Naive thymus-derived CD4-positive, alpha-beta T cell (primary cell): ENCODE measurements at regions of chr14 and their contacts with region 1.

Region 1: DNA sequence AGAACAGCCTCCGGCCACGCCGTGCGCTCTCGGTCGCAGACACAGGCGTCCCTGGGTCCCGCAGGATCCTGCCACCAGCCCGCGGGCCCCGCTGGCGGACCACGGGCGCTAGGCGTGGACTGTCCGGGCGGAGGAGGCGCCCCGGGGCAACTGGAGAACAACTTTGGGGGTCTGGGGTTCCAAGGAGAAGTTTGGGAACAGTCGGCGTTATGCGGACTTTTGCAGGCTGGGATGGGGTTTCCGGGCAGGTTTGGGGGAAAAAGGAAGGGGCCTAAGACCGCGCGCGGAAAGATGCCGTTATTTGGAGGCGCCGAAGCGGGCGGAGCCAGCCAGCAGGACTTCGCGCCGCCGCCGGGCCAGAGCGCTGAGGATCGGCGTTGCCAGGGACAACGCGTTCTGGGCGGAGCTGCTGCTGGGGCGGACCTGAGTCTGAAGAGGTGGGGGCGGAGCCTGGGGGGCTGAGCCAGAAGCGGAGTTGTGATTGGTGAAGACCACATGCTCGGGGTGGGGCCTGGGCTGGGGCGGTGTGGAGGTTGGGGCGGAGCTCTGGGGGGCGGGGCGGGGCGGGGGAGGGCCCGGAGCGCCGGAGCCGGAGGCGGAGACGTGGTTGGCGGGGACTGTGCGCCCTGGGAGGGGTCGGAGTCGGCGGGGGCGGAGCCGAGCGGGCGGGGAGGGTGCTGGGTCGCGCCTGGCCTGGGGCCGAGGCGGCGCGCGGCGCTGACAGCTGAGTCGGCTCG is at the start of gene CYP46A1:
- DNase-seq: peak; percentile 97 to 99 (median 99)
- ATAC-seq: peak; percentile 98
- H3K4me3 ChIP-seq: peak within 1 kb of the TSS; percentile 93
- H3K4me3 Mint-ChIP-seq: peak within 1 kb of the TSS; percentile 79 to 96 (median 92)
- H3K27ac ChIP-seq: peak within 1 kb of the TSS; percentile 75
- H3K27ac Mint-ChIP-seq: peak within 1 kb of the TSS; percentile 52 to 94 (median 83)
- H3K4me1 ChIP-seq: peaks cover 5 to 12% of the 10 kb centered on the region in 2 donors
- H3K4me1 Mint-ChIP-seq: peaks cover 2 to 29% (median 11%) of the 10 kb centered on the region in 7 donors
- H3K27me3 ChIP-seq: no peaks in the 10 kb centered on the region
- H3K27me3 Mint-ChIP-seq: peaks cover 2 to 34% (median 32%) of the 10 kb centered on the region in 5 donors
- total RNA-seq, gene CYP46A1: 0.13 to 0.34 (median 0.32) TPM in 4 of 5 experiments, not detected in the other

Region 2: DNA sequence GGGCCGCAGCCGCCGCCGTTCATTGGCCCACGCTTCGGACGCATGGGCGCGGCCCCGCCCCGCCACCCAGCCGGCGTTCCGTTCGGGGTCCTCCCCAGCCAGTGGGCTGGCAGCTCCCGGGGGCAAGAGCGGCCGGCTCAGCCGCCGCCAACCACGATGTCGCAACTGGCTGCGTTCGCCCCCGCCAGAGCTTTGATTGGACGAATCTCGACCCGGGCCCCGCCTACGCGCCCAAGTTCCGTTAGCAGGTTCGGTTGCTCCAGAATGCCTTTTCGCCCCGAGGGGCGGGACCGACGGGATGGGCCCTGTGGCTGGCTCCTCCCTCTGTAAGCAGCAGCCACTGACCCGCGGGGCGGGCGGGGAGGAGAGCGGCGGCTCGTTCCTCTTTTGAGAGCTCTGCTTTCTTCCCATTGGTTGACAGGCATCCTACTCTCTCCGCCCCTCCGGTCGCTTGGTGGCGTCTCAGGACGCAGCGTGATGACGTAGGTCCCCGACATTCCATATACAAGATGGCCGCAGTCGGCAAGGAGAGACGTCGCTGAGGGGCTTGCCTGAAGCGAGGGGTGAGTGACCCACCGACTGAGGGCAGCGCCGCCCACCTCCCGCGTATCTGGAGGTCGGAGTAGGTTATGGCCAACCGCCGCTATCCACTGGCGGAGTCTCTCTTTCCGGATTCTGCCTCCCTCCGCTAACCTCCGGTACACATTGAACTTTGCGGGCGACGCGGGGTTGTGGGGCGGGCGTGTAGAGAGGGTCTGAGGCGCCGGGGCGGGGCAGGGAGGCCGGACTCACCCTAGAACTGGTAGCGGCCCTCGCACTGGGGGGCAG is 202.7 kb before region 1 on chr14 and contains the start of gene CCNK:
- CTCF ChIA-PET with region 1: interaction called, 3 read pairs
- POLR2A ChIA-PET with region 1: interaction called, 9 read pairs
- intact Hi-C with region 1: loop called (anchors 1 kb)
- DNase-seq: peak; percentile 98 to 100 (median 100)
- ATAC-seq: peak; percentile 92
- H3K4me3 ChIP-seq: peak within 1 kb of the TSS; percentile 86
- H3K4me3 Mint-ChIP-seq: peak within 1 kb of the TSS; percentile 89 to 100 (median 98)
- H3K27ac ChIP-seq: peak within 1 kb of the TSS; percentile 93
- H3K27ac Mint-ChIP-seq: peak within 1 kb of the TSS; percentile 95 to 99 (median 98)
- H3K4me1 ChIP-seq: peaks cover 26 to 34% of the 10 kb centered on the region in 2 donors
- H3K4me1 Mint-ChIP-seq: peaks cover 44 to 79% (median 70%) of the 10 kb centered on the region in 7 donors
- H3K27me3 ChIP-seq: no peaks in the 10 kb centered on the region
- H3K27me3 Mint-ChIP-seq: no peaks in the 10 kb centered on the region
- total RNA-seq, gene CCNK: 68.4 to 139 (median 81.9) TPM

Region 3: GRCh38 chr14:99729991-99730868 is 46.4 kb after region 1 on chr14:
- CTCF ChIA-PET with region 1: no interaction called
- POLR2A ChIA-PET with region 1: no interaction called
- intact Hi-C with region 1: loop called in 1 of 2 experiments (anchors 1 kb)
- DNase-seq: peak; percentile 26 to 85 (median 53)
- ATAC-seq: peak; percentile 71
- H3K4me3 ChIP-seq: no peak overlapping the region
- H3K4me3 Mint-ChIP-seq: peak overlapping the region in 8 of 10 donors; percentile 13 to 75 (median 50)
- H3K27ac ChIP-seq: no peak overlapping the region
- H3K27ac Mint-ChIP-seq: no peak overlapping the region
- H3K4me1 ChIP-seq: no peaks in the 10 kb centered on the region
- H3K4me1 Mint-ChIP-seq: peaks cover 0 to 6% (median 0%) of the 10 kb centered on the region in 7 donors
- H3K27me3 ChIP-seq: no peaks in the 10 kb centered on the region
- H3K27me3 Mint-ChIP-seq: peaks cover 7 to 45% (median 20%) of the 10 kb centered on the region in 5 donors

Region 4: DNA sequence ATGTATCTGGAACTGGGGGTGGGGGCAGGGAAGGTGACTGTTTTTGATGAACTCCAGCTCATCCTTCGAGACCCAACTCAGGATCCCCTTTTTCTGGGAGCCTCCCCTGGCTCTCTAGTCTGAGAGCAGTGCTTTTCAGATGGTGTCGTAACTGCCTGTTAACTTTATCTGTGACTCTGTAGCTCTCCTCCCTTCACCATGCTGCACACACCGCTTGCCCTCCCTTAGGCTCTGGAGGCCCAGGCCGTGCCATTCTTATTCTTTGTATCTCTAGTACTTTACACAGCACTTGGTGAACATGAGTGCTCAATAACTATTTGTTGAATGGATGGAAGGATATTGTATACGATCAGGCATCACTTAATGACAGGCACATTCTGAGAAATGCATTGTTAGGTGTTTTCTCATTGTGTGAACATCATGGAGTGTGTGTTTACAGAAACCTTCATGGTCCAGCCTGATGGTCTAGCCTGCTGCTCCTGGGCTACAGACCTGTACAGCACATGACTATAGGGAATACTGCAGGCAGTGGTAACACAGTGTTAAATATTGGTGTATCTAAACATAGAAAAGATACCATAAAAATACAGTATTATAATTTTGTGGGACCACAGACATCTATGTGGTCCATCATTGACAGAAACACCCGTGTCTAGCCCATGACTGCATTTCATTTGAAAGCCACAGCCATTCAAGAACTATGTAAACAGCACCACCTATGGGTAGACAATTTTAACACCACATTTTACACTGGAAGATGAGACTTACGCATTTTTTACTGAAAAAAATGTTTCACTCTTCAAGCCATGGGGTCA is 201.3 kb after region 1 on chr14:
- CTCF ChIA-PET with region 1: interaction called, 5 read pairs
- POLR2A ChIA-PET with region 1: no interaction called
- intact Hi-C with region 1: loop called in 1 of 2 experiments (anchors 1 kb)
- DNase-seq: peak in 7 of 9 donors; percentile 26 to 69 (median 58)
- ATAC-seq: peak; percentile 83
- H3K4me3 ChIP-seq: no peak overlapping the region
- H3K4me3 Mint-ChIP-seq: no peak overlapping the region
- H3K27ac ChIP-seq: no peak overlapping the region
- H3K27ac Mint-ChIP-seq: no peak overlapping the region
- H3K4me1 ChIP-seq: no peaks in the 10 kb centered on the region
- H3K4me1 Mint-ChIP-seq: no peaks in the 10 kb centered on the region
- H3K27me3 ChIP-seq: peaks cover 0 to 2% of the 10 kb centered on the region in 2 donors
- H3K27me3 Mint-ChIP-seq: peaks cover 3 to 16% (median 8%) of the 10 kb centered on the region in 5 donors

Region 5: GRCh38 chr14:100285021-100285912 is 601.5 kb after region 1 on chr14:
- CTCF ChIA-PET with region 1: no interaction called
- POLR2A ChIA-PET with region 1: no interaction called
- intact Hi-C with region 1: loop called in 1 of 2 experiments (anchors 1 kb)
- DNase-seq: peak; percentile 71 to 92 (median 79)
- ATAC-seq: peak; percentile 97
- H3K4me3 ChIP-seq: peak overlapping the region; percentile 71
- H3K4me3 Mint-ChIP-seq: peak overlapping the region; percentile 27 to 91 (median 73)
- H3K27ac ChIP-seq: peak overlapping the region; percentile 85
- H3K27ac Mint-ChIP-seq: peak overlapping the region in 5 of 9 donors; percentile 9 to 87 (median 59)
- H3K4me1 ChIP-seq: peaks cover 0 to 6% of the 10 kb centered on the region in 2 donors
- H3K4me1 Mint-ChIP-seq: peaks cover 2 to 21% (median 8%) of the 10 kb centered on the region in 7 donors
- H3K27me3 ChIP-seq: no peaks in the 10 kb centered on the region
- H3K27me3 Mint-ChIP-seq: no peaks in the 10 kb centered on the region